Colonic mucosa (tissue), 4 donors: ENCODE measurements at regions of chr7 and their contacts with region 1.

Region 1: DNA sequence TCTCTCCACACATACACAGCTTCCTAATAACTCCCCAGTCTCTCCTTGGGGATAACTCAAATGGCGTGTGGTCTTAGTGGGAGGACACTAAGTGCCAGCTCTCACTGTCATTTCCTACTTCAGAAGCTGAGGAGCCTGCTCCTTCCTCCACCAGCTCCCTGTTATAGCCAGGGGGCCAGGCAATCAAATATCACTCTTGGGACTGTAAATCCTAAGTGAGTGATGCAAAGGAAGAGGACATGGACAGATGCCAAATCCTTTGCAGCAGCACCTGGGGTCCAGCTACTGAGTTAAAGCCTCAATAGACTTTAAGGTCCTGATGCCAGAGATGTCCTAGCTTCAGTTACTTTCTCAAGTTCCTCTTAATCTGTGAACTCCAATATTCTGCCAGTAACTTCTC is 34.1 kb downstream of the SEM1 start:
- DNase-seq: no peak
- H3K4me3 ChIP-seq: no peak overlapping the region
- H3K27ac ChIP-seq: no peak overlapping the region
- H3K4me1 ChIP-seq: no peaks in the 10 kb centered on the region
- H3K27me3 ChIP-seq: no peaks in the 10 kb centered on the region
- CTCF ChIP-seq: no peak

Region 2: GRCh38 chr7:96654630-96655188 is 20.8 kb before region 1 on chr7:
- intact Hi-C with region 1: loop called (anchors 2 kb)
- DNase-seq: no peak
- H3K4me3 ChIP-seq: no peak overlapping the region
- H3K27ac ChIP-seq: no peak overlapping the region
- H3K4me1 ChIP-seq: no peaks in the 10 kb centered on the region
- H3K27me3 ChIP-seq: no peaks in the 10 kb centered on the region
- CTCF ChIP-seq: no peak